ENCODE measurements at regions of chr6 and their contacts with region 1.

Region 1: GRCh38 chr6:159104163-159104925 is 59.6 kb upstream of the TAGAP start:
- DNase-seq: peak; percentile 85
- ATAC-seq: peak; percentile 61
- H3K4me3 Mint-ChIP-seq: peak overlapping the region; percentile 70
- H3K27ac Mint-ChIP-seq: peak overlapping the region; percentile 91
- H3K4me1 Mint-ChIP-seq: peaks cover 57% of the 10 kb centered on the region
- H3K27me3 Mint-ChIP-seq: no peaks in the 10 kb centered on the region

Region 2: GRCh38 chr6:158987657-158988056 is 116.7 kb before region 1 on chr6:
- POLR2A ChIA-PET with region 1: no interaction called
- DNase-seq: no peak
- ATAC-seq: no peak
- H3K4me3 Mint-ChIP-seq: no peak overlapping the region
- H3K27ac Mint-ChIP-seq: no peak overlapping the region
- H3K4me1 Mint-ChIP-seq: peaks cover 10% of the 10 kb centered on the region
- H3K27me3 Mint-ChIP-seq: no peaks in the 10 kb centered on the region

Region 3: DNA sequence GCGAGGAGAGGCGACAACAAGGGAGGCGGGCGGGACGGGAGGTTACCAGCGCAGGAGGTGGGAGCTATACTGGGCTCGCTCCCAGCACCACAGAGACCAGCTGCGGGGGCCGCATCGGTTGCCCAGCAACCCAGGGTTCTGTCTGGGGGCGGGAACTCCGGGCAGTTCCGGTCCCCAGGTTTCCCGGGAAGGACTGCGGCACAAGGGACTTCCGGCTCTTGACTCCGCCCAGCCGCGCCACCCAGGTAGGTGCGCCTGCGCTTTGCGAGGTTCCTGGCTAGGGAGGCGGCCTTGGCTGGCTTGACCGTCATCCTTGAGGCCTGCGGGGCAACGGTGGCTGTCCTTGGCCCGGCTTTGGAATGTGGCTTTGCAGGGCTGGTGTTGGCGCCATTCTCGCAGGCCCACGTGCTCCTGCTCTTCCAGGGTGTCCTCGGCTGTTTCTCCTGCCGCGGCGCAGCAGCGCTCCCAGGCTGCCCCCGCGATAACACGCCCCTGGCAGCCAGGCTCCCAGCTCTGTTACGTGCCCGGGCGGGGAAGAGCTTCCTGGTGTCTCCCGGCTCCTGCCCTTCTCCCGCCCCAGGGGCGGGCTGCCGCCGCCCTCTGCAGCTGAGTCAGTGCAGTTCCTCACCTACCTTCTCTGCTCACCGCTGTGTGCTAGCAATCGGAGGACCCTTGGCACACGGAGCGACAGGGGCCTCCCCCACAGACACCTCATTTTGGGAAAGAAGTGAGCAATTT is 104.5 kb before region 1 on chr6 and contains the start of gene RSPH3:
- POLR2A ChIA-PET with region 1: interaction called, 14 read pairs
- DNase-seq: peak; percentile 91
- ATAC-seq: peak; percentile 90
- H3K4me3 Mint-ChIP-seq: peak within 1 kb of the TSS; percentile 94
- H3K27ac Mint-ChIP-seq: peak within 1 kb of the TSS; percentile 86
- H3K4me1 Mint-ChIP-seq: peaks cover 32% of the 10 kb centered on the region
- H3K27me3 Mint-ChIP-seq: no peaks in the 10 kb centered on the region
- total RNA-seq, gene RSPH3: 2.2 to 2.7 TPM

Region 4: DNA sequence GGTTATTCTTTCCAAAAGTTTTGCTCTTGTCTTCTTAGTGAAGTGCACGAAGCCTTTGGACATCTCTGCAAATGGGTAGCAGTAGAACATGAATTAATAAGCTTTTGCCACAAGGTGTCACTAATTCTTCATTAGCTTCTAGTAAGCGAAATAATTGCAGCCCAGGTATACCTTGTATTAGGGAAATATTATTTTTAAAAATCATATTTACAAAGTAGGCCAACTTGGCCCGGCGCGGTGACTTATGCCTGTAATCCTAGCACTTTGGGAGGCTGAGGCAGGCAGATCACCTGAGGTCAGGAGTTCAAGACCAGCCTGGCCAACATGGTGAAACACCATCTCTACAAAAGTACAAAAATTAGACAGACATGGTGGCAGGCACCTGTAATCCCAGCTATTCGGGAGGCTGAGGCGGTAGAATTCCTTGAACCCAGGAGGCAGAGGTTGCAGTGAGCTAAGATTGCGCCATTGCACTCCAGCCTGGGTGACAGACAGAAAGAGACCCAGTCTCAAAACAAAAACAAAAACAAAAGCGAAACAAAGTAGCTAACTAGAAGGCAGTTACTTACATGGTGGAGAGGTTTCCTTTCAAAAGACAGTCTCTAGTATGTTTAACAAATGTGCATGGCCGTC is 95.6 kb before region 1 on chr6:
- POLR2A ChIA-PET with region 1: interaction called, 17 read pairs
- DNase-seq: peak; percentile 39
- ATAC-seq: peak; percentile 64
- H3K4me3 Mint-ChIP-seq: peak overlapping the region; percentile 33
- H3K27ac Mint-ChIP-seq: no peak overlapping the region
- H3K4me1 Mint-ChIP-seq: peaks cover 13% of the 10 kb centered on the region
- H3K27me3 Mint-ChIP-seq: no peaks in the 10 kb centered on the region

Measured in activated naive CD8-positive, alpha-beta T cell treated with anti-CD3 and anti-CD28 coated beads, Interleukin-2, amount 10 ng/mL, durations not matched to agents 7 days and 5 days (primary cell).